ENCODE measurements at regions of chr18 and their contacts with region 1.

Region 1: GRCh38 chr18:3771121-3771971 is 321.4 kb downstream of the TGIF1 start:
- DNase-seq: peak; percentile 79 to 86
- ATAC-seq: peak; percentile 81 to 97 (median 96)
- H3K4me3 ChIP-seq: peak overlapping the region; percentile 24
- H3K27ac ChIP-seq: no peak overlapping the region
- H3K4me1 ChIP-seq: no peaks in the 10 kb centered on the region
- H3K27me3 ChIP-seq: peaks cover under 1 to 13% (median 3%) of the 10 kb centered on the region in 3 donors
- CTCF ChIP-seq: peak; percentile 81

Region 2: GRCh38 chr18:3869848-3870247 is 98.5 kb after region 1 on chr18:
- intact Hi-C with region 1: loop called in 1 of 2 experiments (anchors 5 kb)
- DNase-seq: no peak
- ATAC-seq: no peak
- H3K4me3 ChIP-seq: no peak overlapping the region
- H3K27ac ChIP-seq: no peak overlapping the region
- H3K4me1 ChIP-seq: no peaks in the 10 kb centered on the region
- H3K27me3 ChIP-seq: no peaks in the 10 kb centered on the region
- CTCF ChIP-seq: peak; percentile 27

Region 3: DNA sequence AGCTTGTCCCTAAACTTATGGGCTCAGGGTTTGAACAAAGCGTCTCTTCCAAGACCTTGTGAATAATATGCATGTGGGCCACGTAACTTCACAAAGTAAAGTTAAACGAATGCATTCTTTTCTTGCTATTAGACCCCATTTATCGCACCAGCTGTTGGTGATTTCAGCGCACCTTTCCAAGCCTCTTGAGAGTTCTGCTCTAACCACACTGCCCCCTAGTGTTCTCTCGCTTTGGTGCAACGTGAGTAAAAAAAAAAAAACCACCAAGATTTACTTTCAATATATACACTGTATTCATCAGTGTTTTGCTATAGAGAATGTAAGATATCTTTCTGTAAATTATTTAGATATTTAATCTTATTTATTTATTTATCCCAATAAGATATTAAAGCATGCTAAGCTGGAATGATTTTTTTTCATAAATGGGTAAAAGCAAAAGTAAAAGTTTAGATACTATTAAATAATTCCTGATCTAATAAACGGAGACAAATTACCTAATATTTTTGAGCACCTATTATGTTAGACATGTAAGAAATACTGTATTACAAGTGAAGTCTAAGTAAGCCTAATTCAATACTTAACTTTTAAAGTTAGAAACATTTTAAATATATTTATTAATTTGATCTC is 224.2 kb after region 1 on chr18:
- intact Hi-C with region 1: loop called (anchors 2 to 5 kb)
- DNase-seq: no peak
- ATAC-seq: no peak
- H3K4me3 ChIP-seq: no peak overlapping the region
- H3K27ac ChIP-seq: no peak overlapping the region
- H3K4me1 ChIP-seq: no peaks in the 10 kb centered on the region
- H3K27me3 ChIP-seq: no peaks in the 10 kb centered on the region
- CTCF ChIP-seq: peak; percentile 62

Region 4: GRCh38 chr18:4068552-4069158 is 297.3 kb after region 1 on chr18:
- intact Hi-C with region 1: loop called in 1 of 2 experiments (anchors 5 kb)
- DNase-seq: no peak
- ATAC-seq: no peak
- H3K4me3 ChIP-seq: no peak overlapping the region
- H3K27ac ChIP-seq: no peak overlapping the region
- H3K4me1 ChIP-seq: no peaks in the 10 kb centered on the region
- H3K27me3 ChIP-seq: no peaks in the 10 kb centered on the region
- CTCF ChIP-seq: peak; percentile 48

Measured in psoas muscle (tissue), 8 donors.